Dorsolateral prefrontal cortex (tissue), 120 donors: ENCODE measurements at regions of chr12 and their contacts with region 1.

Region 1: GRCh38 chr12:118372541-118373495 is at the start of gene TAOK3:
- DNase-seq: peak; percentile 94 to 99 (median 98)
- H3K4me3 ChIP-seq: peak within 1 kb of the TSS; percentile 69 to 100 (median 94)
- H3K27ac ChIP-seq: peak within 1 kb of the TSS in 58 of 59 donors; percentile 32 to 99 (median 88)
- H3K27me3 ChIP-seq: no peaks in the 10 kb centered on the region
- CTCF ChIP-seq: peak in 36 of 56 donors; percentile 7 to 55 (median 24)
- total RNA-seq, gene TAOK3: 47.3 to 103 (median 73.3) TPM

Region 2: DNA sequence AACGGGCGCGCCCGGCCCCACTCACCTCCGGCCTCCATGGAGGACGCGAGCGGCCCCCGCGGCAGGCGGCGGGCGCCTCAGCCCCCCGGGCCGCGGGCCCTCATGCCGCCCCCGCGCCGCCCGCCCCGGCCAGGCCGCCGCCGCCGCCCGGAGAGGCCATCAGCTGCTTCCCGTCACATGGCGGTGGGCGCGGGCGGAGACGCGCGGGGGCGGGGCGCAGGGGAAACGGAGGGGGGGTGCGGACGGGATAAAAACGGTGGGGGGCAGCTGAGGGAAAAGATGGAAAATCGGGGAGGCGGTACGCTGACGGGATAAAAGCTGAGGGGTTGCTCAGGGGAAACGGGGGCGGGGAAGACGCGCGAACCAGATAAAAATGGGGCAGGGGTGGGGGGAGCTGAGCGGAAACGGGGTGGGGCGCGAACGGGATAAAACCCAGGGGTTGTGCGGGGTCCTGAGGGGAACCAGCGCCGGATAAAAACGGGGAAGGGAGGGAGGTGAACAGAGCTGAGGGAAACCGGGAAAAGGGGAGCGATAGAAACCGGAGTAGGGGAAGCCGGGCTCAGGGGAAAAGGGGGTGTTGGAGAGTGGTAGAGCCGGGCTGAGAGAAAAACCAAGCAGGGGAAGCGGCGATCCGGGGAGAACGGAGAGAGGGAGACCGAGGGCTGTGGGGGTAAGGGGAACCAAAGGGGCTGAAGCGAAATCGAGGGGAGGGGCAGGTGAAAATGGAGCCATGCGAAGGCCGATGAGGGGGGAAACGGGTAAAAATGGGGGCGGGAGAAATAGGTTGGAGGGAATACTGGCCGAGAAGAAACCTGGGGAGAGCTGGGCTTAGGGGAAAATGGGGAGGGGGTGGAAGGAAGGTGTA is 311.6 kb before region 1 on chr12 and contains the start of gene WSB2:
- intact Hi-C with region 1: loop called in 1 of 2 experiments (anchors 5 kb)
- DNase-seq: peak; percentile 62 to 88 (median 72)
- H3K4me3 ChIP-seq: peak within 1 kb of the TSS; percentile 67 to 93 (median 83)
- H3K27ac ChIP-seq: peak within 1 kb of the TSS; percentile 86 to 99 (median 96)
- H3K27me3 ChIP-seq: no peaks in the 10 kb centered on the region
- CTCF ChIP-seq: no peak
- total RNA-seq, gene WSB2: 117 to 328 (median 199) TPM

Region 3: DNA sequence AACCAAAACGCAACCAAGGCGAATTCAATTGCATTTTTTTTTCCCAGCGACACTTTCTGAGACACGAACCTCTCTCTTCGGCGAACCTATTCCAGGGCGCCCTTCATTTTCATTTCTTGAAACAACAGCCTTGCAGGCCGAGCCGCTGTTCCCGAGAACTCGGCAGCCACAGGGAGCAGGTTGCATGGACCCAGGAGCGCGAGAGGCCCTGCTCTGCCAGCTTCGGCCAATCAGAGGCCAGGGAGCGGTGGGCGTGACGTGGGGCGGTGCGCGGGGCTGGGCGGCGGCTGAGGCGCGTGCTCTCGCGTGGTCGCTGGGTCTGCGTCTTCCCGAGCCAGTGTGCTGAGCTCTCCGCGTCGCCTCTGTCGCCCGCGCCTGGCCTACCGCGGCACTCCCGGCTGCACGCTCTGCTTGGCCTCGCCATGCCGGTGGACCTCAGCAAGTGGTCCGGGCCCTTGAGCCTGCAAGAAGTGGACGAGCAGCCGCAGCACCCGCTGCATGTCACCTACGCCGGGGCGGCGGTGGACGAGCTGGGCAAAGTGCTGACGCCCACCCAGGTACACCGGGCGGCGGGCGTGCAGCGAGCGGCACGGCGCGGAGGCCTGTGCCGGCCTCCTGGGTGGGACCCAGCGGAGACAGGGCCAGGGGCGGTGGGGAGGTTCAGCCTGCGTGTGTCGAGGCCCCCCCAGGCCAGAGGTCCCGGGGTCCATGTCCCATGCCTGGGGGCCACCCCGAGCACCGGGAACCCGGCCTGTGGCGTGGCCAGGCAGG is 236.8 kb before region 1 on chr12 and contains the start of gene PEBP1:
- intact Hi-C with region 1: loop called in 1 of 2 experiments (anchors 5 kb)
- DNase-seq: peak; percentile 96 to 99 (median 98)
- H3K4me3 ChIP-seq: peak within 1 kb of the TSS; percentile 68 to 100 (median 97)
- H3K27ac ChIP-seq: peak within 1 kb of the TSS; percentile 76 to 99 (median 98)
- H3K27me3 ChIP-seq: no peaks in the 10 kb centered on the region
- CTCF ChIP-seq: peak in 35 of 56 donors; percentile 5 to 55 (median 28)
- total RNA-seq, gene PEBP1: 437 to 1,009 (median 790) TPM

Region 4: DNA sequence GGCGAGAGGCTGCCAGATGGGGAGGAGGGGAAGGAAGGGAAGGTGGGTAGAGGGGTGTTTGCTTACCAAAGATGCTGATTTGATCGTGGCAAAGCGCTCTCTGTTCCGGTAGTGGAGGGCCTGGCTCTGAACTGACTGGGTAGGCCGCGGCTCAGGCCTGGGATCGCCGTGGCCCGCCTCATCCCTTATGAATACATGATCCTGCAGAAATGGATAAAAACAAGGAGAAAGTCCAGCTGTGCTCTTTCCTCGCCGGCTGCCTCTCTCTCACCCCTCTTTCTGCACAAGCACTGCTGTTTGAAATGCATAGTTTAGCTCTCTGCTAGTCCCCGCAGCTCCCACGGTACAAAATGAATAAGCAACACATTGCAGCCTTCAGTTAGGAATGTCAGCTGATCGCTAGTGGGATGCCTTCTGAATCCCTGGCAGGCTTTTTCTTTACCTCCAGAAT is 183.1 kb before region 1 on chr12:
- intact Hi-C with region 1: loop called (anchors 2 kb)
- DNase-seq: peak; percentile 53 to 70 (median 63)
- H3K4me3 ChIP-seq: peak overlapping the region; percentile 41 to 75 (median 64)
- H3K27ac ChIP-seq: peak overlapping the region; percentile 82 to 100 (median 97)
- H3K27me3 ChIP-seq: no peaks in the 10 kb centered on the region
- CTCF ChIP-seq: peak in 2 of 56 donors; percentile 14 to 31

Region 5: DNA sequence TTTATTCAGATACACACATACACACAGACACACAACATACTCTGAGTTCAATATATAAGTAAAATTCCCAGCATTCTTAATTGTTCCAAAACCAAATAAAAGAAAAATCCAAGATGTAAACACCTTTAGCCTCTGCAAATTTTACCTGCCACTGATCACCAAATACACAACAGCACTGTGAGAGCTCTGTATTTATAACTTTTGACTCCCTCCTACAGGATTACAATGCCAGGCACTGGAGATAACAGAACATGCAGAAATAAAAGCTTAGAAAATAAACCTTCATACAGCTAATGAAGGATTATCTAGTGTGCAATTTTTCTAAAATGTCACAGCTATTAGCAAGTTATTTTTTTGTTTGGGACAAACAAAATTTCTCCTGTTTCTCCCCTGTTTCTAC is 85.1 kb before region 1 on chr12:
- intact Hi-C with region 1: no loop called
- DNase-seq: no peak
- H3K4me3 ChIP-seq: no peak overlapping the region
- H3K27ac ChIP-seq: no peak overlapping the region
- H3K27me3 ChIP-seq: no peaks in the 10 kb centered on the region
- CTCF ChIP-seq: no peak

Region 6: GRCh38 chr12:118397708-118398440 is 25.1 kb after region 1 on chr12:
- intact Hi-C with region 1: no loop called
- DNase-seq: no peak
- H3K4me3 ChIP-seq: no peak overlapping the region
- H3K27ac ChIP-seq: peak overlapping the region in 6 of 59 donors; percentile 1 to 35 (median 22)
- H3K27me3 ChIP-seq: no peaks in the 10 kb centered on the region
- CTCF ChIP-seq: no peak

Region 7: GRCh38 chr12:118544569-118544968 is 171.8 kb after region 1 on chr12:
- intact Hi-C with region 1: no loop called
- DNase-seq: no peak
- H3K4me3 ChIP-seq: no peak overlapping the region
- H3K27ac ChIP-seq: no peak overlapping the region
- H3K27me3 ChIP-seq: no peaks in the 10 kb centered on the region
- CTCF ChIP-seq: no peak

Region 8: GRCh38 chr12:119667577-119668323 is 1294.9 kb after region 1 on chr12 and contains the start of gene PRKAB1:
- intact Hi-C with region 1: loop called in 1 of 2 experiments (anchors 10 kb)
- DNase-seq: peak; percentile 91 to 97 (median 96)
- H3K4me3 ChIP-seq: peak within 1 kb of the TSS; percentile 58 to 100 (median 86)
- H3K27ac ChIP-seq: peak within 1 kb of the TSS; percentile 48 to 97 (median 90)
- H3K27me3 ChIP-seq: no peaks in the 10 kb centered on the region
- CTCF ChIP-seq: peak; percentile 72 to 99 (median 94)
- total RNA-seq, gene PRKAB1: 17.0 to 44.5 (median 30.2) TPM